Stomach (tissue), 19 donors: ENCODE measurements at regions of chr15 and their contacts with region 1.

Region 1: GRCh38 chr15:23866832-23867231 is 179.7 kb upstream of the NDN start:
- DNase-seq: peak in 1 of 2 donors; percentile 48
- H3K4me3 ChIP-seq: no peak overlapping the region
- H3K27ac ChIP-seq: no peak overlapping the region
- H3K4me1 ChIP-seq: peaks cover 0 to 5% (median 0%) of the 10 kb centered on the region in 4 donors
- H3K27me3 ChIP-seq: peaks cover 0 to 20% (median 0%) of the 10 kb centered on the region in 3 donors
- CTCF ChIP-seq: peak in 1 of 7 experiments; percentile 11
- EP300 ChIP-seq: no peak
- POLR2A ChIP-seq: no peak

Region 2: DNA sequence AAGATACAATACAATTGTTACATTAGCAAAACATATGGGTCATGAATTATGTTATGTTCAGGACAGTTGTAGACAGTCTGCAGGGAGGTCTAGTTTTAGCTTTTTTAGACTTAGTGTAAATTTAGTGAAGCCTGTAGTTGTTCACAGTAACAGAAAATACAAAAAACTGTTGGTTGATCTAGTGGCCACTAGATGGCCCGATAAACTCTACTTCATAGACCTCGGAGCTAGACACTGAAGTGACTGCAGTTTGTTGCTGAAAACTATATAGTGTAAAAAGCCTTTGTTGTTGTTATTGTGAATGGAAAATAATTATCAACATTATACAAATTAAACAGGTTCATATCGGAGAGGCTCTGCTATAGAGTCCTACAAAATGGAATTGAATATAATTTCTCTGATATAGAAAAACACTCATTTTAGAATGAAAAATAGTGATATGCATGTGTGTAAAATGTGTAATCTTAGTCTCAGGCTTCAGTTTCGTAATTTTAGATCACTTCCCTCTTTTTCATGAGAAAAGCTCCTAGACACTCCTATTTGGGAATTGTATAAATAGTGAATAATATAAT is 237.5 kb before region 1 on chr15:
- intact Hi-C with region 1: no loop called
- DNase-seq: no peak
- H3K4me3 ChIP-seq: no peak overlapping the region
- H3K27ac ChIP-seq: no peak overlapping the region
- H3K4me1 ChIP-seq: no peaks in the 10 kb centered on the region
- H3K27me3 ChIP-seq: peaks cover 0 to 29% (median 0%) of the 10 kb centered on the region in 3 donors
- CTCF ChIP-seq: peak in 1 of 7 experiments; percentile 28
- EP300 ChIP-seq: no peak
- POLR2A ChIP-seq: no peak

Region 3: GRCh38 chr15:23773093-23773492 is 93.7 kb before region 1 on chr15:
- intact Hi-C with region 1: no loop called
- DNase-seq: no peak
- H3K4me3 ChIP-seq: no peak overlapping the region
- H3K27ac ChIP-seq: no peak overlapping the region
- H3K4me1 ChIP-seq: no peaks in the 10 kb centered on the region
- H3K27me3 ChIP-seq: no peaks in the 10 kb centered on the region
- CTCF ChIP-seq: no peak
- EP300 ChIP-seq: no peak
- POLR2A ChIP-seq: no peak

Region 4: GRCh38 chr15:23797747-23798446 is 68.9 kb before region 1 on chr15:
- intact Hi-C with region 1: no loop called
- DNase-seq: peak in 1 of 2 donors; percentile 74
- H3K4me3 ChIP-seq: no peak overlapping the region
- H3K27ac ChIP-seq: no peak overlapping the region
- H3K4me1 ChIP-seq: no peaks in the 10 kb centered on the region
- H3K27me3 ChIP-seq: no peaks in the 10 kb centered on the region
- CTCF ChIP-seq: no peak
- EP300 ChIP-seq: no peak
- POLR2A ChIP-seq: no peak

Region 5: DNA sequence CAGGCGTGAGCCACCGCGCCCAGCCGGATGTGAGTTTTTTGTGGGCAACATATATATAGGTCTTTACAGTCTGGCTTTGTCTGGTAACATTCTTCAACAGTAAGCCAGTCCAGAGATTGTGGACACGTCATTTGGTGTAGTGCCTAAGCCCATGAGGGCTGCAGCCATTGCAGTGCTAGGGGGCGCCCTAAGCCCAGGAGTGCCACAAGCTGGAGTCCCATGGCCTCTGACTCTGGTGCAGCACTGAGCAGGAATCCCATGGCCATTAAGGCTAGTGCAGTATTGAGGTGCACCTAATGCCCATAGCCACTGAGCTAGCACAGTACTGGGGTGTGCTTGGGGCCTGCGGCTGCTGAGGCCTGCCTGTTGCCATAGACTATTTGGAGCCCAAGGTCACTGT is 43.3 kb before region 1 on chr15:
- intact Hi-C with region 1: no loop called
- DNase-seq: peak in 1 of 2 donors; percentile 1
- H3K4me3 ChIP-seq: no peak overlapping the region
- H3K27ac ChIP-seq: no peak overlapping the region
- H3K4me1 ChIP-seq: no peaks in the 10 kb centered on the region
- H3K27me3 ChIP-seq: no peaks in the 10 kb centered on the region
- CTCF ChIP-seq: no peak
- EP300 ChIP-seq: no peak
- POLR2A ChIP-seq: no peak

Region 6: DNA sequence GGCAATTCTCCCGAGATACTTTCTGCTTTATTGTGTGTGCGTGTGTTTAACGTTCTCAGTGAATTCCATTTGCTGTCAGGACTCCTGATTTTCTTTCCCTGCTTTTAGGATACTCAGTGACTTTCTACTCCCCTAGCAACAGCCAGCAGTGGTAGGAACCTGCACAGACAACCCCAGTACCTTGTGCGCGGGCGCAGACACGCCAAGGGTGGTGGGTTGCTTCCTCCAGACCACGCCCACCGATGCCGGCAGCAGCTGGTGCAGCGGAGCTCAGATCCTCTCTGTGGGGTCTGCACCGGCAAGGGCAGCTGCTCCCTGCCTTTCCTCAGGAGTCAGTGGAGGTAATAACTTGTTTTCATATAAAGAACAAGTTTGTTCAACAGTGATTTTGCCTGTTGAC is 45.4 kb after region 1 on chr15:
- intact Hi-C with region 1: loop called (anchors 5 kb)
- DNase-seq: peak in 1 of 2 donors; percentile 25
- H3K4me3 ChIP-seq: no peak overlapping the region
- H3K27ac ChIP-seq: no peak overlapping the region
- H3K4me1 ChIP-seq: no peaks in the 10 kb centered on the region
- H3K27me3 ChIP-seq: peaks cover 0 to 5% (median 0%) of the 10 kb centered on the region in 3 donors
- CTCF ChIP-seq: no peak
- EP300 ChIP-seq: no peak
- POLR2A ChIP-seq: no peak